AG04450 (cell line): ENCODE measurements at regions of chr2 and their contacts with region 1.

Region 1: GRCh38 chr2:172931918-172932520 is 143.6 kb upstream of the MAP3K20 start:
- DNase-seq: peak; percentile 49
- H3K4me3 ChIP-seq: no peak overlapping the region
- H3K27ac ChIP-seq: no peak overlapping the region
- H3K27me3 ChIP-seq: no peaks in the 10 kb centered on the region
- CTCF ChIP-seq: peak; percentile 78

Region 2: DNA sequence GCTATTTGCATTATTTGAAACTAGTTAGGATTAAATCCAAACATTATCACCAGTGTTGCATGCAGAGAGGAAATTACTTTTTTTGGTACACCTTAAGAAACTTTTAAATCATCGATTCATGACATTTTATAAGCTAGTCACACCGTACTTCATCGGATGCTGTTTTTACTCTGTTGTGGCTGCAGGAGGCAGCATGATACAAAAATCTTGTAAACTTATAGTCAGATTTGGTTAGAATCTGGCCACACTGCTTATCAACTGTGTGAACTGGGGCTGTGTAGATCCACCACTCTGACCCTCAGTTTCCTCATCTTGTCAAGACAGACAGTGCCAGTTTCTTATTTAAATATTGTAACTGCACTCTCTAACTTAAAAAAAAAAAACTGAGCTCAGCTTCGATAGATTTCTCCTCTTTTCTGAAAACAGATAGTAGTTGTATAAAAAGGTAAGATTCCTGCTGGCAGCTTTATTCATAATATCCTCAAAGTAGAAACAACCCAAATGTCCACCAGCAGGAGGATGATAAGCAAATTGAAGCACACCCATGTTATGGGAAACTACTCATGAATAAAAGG is 118.6 kb before region 1 on chr2:
- CTCF ChIA-PET with region 1: interaction called, 187 read pairs
- POLR2A ChIA-PET with region 1: no interaction called
- DNase-seq: no peak
- H3K4me3 ChIP-seq: no peak overlapping the region
- H3K27ac ChIP-seq: no peak overlapping the region
- H3K27me3 ChIP-seq: no peaks in the 10 kb centered on the region
- CTCF ChIP-seq: peak; percentile 63

Region 3: GRCh38 chr2:172864182-172864581 is 67.8 kb before region 1 on chr2:
- CTCF ChIA-PET with region 1: interaction called, 52 read pairs
- POLR2A ChIA-PET with region 1: no interaction called
- DNase-seq: no peak
- H3K4me3 ChIP-seq: no peak overlapping the region
- H3K27ac ChIP-seq: no peak overlapping the region
- H3K27me3 ChIP-seq: no peaks in the 10 kb centered on the region
- CTCF ChIP-seq: peak; percentile 73

Region 4: GRCh38 chr2:172909454-172909853 is 22.6 kb before region 1 on chr2:
- CTCF ChIA-PET with region 1: interaction called, 16 read pairs
- POLR2A ChIA-PET with region 1: no interaction called
- DNase-seq: no peak
- H3K4me3 ChIP-seq: no peak overlapping the region
- H3K27ac ChIP-seq: no peak overlapping the region
- H3K27me3 ChIP-seq: peaks cover 5% of the 10 kb centered on the region
- CTCF ChIP-seq: no peak

Region 5: DNA sequence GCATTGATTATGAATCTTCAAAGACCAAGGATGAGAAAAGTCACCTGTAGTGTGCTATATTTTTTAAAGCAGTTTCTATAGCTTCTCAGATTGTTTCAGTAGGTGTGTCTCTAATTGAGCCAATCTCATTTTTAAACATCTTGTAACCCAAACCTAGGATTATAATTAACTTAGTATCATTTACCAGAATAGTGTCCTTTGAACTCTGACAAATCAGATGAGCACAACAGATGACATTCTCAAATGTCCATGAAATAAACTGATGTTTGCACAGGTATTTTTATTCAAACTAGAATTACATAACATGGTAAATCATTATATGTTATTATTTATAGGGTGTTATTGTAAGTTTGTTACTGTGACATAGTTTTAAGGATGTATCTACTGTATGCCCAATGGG is 17.5 kb after region 1 on chr2:
- CTCF ChIA-PET with region 1: interaction called, 39 read pairs
- POLR2A ChIA-PET with region 1: no interaction called
- DNase-seq: no peak
- H3K4me3 ChIP-seq: no peak overlapping the region
- H3K27ac ChIP-seq: no peak overlapping the region
- H3K27me3 ChIP-seq: no peaks in the 10 kb centered on the region
- CTCF ChIP-seq: no peak

Region 6: DNA sequence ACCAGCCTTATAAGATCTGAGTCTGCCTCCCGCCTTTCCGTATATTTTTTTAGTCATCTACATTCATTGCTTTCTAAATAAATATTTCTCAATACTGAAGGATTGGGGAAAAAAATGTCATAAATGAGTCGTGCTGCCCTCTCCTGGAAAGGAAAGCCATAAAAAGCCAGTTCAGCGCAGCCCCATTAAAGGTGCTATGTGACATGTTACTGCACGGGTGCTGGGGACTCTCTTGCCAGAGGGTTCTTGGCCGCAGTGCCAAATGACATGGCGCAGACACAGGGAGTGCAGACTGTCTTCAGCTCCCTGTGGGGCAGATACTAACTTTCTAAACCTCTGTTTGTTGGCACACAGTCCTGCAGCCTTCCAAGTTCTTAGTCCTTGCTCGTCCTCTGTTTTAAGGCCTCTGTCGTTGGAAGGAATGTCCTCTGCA is 89.9 kb after region 1 on chr2:
- CTCF ChIA-PET with region 1: interaction called, 15 read pairs
- POLR2A ChIA-PET with region 1: no interaction called
- DNase-seq: no peak
- H3K4me3 ChIP-seq: no peak overlapping the region
- H3K27ac ChIP-seq: no peak overlapping the region
- H3K27me3 ChIP-seq: no peaks in the 10 kb centered on the region
- CTCF ChIP-seq: peak; percentile 61